ENCODE measurements at regions of chr16 and their contacts with region 1.

Region 1: DNA sequence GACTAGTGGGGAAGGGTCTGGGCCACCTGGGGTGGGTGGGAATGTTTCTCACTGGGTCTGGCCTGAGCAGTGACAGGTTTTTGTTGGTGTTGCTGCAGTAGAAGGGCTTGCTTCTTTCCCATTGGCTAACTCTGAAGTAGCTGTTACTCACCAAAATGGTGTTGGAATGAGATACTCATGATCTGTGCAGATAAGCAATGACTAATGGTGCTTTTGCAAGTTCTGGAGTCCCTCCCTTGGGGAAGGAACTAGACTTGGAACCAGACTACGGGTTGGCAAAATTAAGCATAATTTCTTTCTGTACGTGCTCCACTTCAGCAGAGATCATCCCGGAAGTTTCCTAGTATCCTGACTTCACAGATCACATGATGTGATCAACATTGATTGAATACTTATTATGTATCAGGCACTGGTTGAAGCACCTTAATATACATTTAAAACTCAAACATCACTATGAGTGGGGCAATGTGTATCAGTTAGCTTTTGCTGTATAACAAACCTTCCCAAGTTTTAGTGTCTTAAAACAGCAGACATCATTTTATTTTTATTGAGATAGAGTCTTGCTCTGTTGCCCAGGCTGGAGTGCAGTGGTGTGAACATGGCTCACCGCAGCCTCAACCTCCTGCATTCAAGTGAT is 30.1 kb downstream of the CHP2 start:
- DNase-seq: peak; percentile 88
- H3K4me3 ChIP-seq: no peak overlapping the region
- H3K27ac ChIP-seq: no peak overlapping the region
- H3K4me1 ChIP-seq: no peaks in the 10 kb centered on the region
- H3K27me3 ChIP-seq: peaks cover 2% of the 10 kb centered on the region
- CTCF ChIP-seq: no peak

Region 2: GRCh38 chr16:23694644-23695373 is 90.1 kb before region 1 on chr16:
- CTCF ChIA-PET with region 1: no interaction called
- dilution Hi-C with region 1: loop called (anchors 5 kb)
- in situ Hi-C with region 1: no loop called
- intact Hi-C with region 1: no loop called
- DNase-seq: no peak
- H3K4me3 ChIP-seq: no peak overlapping the region
- H3K27ac ChIP-seq: no peak overlapping the region
- H3K4me1 ChIP-seq: no peaks in the 10 kb centered on the region
- H3K27me3 ChIP-seq: no peaks in the 10 kb centered on the region
- CTCF ChIP-seq: no peak

Measured in mammary epithelial cell (primary cell).